PC-9 (cell line): ENCODE measurements at regions of chr7 and their contacts with region 1.

Region 1: DNA sequence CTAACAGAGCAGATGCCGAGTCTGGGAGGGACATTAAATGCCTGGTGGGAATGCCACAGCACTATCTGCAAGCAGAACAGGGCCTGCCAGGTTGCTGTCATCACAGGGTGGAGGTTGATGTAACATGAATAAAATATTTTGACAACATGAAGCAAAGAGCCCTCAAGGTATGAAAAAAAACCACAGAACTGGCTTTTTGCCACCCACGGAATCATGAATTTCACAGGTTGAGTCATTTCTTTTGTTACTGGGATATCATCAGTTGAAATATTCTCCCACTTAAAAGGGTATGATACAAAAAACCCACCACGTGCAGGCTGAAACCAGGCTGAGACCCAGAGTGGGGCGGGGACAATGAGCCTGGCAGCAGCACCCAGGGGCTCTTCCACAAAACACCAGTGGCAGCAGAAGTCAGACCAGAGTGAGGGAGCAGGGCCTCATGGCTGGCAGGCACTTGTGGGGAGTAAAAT is 220.1 kb downstream of the TNS3 start:
- DNase-seq: peak; percentile 88 to 95
- H3K4me3 ChIP-seq: no peak overlapping the region
- H3K27ac ChIP-seq: peak overlapping the region; percentile 69
- H3K4me1 ChIP-seq: peaks cover 20% of the 10 kb centered on the region
- H3K27me3 ChIP-seq: no peaks in the 10 kb centered on the region
- CTCF ChIP-seq: no peak

Region 2: GRCh38 chr7:47291461-47292081 is 70.2 kb before region 1 on chr7:
- CTCF ChIA-PET with region 1: no interaction called
- POLR2A ChIA-PET with region 1: no interaction called
- intact Hi-C with region 1: no loop called
- DNase-seq: peak; percentile 44 to 76
- H3K4me3 ChIP-seq: no peak overlapping the region
- H3K27ac ChIP-seq: peak overlapping the region; percentile 58
- H3K4me1 ChIP-seq: peaks cover 32% of the 10 kb centered on the region
- H3K27me3 ChIP-seq: no peaks in the 10 kb centered on the region
- CTCF ChIP-seq: no peak

Region 3: GRCh38 chr7:47453093-47454049 is 91.6 kb after region 1 on chr7:
- CTCF ChIA-PET with region 1: no interaction called
- POLR2A ChIA-PET with region 1: no interaction called
- intact Hi-C with region 1: loop called (anchors 2 kb)
- DNase-seq: peak; percentile 83 to 99
- H3K4me3 ChIP-seq: peak overlapping the region; percentile 58
- H3K27ac ChIP-seq: peak overlapping the region; percentile 83
- H3K4me1 ChIP-seq: peaks cover 80% of the 10 kb centered on the region
- H3K27me3 ChIP-seq: no peaks in the 10 kb centered on the region
- CTCF ChIP-seq: no peak; the same call in 1 of the 2 replicates

Region 4: DNA sequence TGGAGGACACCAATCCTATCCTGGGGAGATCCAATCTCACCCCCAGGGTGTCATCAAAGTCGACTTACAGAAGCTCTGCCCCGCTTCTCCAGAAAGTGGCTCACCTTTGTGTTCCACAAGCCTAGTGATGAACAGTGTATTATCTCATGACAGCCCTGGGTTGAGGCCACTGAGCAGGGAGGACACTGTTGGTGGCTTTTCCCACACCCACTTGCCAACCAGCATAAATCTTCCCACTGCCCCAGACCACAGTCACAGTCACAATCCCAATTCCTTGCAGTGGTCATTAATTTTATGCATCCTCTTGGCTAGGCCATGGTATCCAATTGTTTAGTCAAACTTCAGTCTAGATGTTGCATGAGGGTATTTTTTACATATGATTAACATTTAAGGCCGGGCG is 201.7 kb after region 1 on chr7:
- CTCF ChIA-PET with region 1: no interaction called
- POLR2A ChIA-PET with region 1: no interaction called
- intact Hi-C with region 1: no loop called
- DNase-seq: no peak
- H3K4me3 ChIP-seq: no peak overlapping the region
- H3K27ac ChIP-seq: no peak overlapping the region
- H3K4me1 ChIP-seq: peaks cover 23% of the 10 kb centered on the region
- H3K27me3 ChIP-seq: no peaks in the 10 kb centered on the region
- CTCF ChIP-seq: no peak